ENCODE measurements at regions of chr3 and their contacts with region 1.

Region 1: DNA sequence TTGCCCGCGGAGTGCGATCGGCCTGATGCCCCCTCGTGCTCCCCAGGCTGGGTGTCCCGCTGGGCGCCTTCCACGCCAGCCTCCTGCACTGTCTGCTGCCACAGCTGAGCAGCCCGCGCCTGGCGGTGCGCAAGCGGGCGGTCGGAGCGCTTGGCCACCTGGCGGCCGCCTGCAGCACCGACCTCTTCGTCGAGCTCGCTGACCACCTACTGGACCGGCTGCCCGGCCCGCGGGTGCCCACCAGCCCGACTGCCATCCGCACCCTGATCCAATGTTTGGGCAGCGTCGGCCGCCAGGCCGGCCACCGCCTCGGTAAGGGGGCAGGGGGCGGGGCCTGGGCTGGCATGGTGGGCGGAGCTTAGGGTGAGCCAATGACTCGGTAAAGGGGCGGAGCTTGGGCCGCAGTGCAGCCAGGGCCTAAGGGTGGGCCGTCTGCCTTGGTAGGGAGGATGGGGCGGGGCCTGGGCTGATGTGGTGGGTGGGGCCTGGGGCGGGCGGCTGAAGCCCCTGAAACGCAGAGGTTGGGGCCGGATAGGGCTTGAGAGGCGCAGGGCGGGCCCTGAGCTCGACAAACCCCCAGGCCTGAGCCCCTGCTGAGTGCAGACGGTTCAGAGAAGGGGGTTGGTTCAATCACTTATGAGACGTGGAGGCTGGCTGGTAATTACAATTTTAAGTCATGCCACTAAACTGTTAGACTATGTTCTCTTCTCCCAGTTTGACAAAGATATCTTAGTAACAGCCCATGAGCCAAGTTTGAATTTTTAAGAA is 13.7 kb downstream of the CAND2 start:
- DNase-seq: peak; percentile 87 to 98
- H3K4me3 ChIP-seq: peak overlapping the region; percentile 37 to 57
- H3K27ac ChIP-seq: peak overlapping the region; percentile 53 to 77
- H3K4me1 ChIP-seq: peaks cover 0 to 11% of the 10 kb centered on the region in 2 donors
- H3K27me3 ChIP-seq: no peaks in the 10 kb centered on the region
- CTCF ChIP-seq: peak; percentile 76 to 92 (median 85)

Region 2: DNA sequence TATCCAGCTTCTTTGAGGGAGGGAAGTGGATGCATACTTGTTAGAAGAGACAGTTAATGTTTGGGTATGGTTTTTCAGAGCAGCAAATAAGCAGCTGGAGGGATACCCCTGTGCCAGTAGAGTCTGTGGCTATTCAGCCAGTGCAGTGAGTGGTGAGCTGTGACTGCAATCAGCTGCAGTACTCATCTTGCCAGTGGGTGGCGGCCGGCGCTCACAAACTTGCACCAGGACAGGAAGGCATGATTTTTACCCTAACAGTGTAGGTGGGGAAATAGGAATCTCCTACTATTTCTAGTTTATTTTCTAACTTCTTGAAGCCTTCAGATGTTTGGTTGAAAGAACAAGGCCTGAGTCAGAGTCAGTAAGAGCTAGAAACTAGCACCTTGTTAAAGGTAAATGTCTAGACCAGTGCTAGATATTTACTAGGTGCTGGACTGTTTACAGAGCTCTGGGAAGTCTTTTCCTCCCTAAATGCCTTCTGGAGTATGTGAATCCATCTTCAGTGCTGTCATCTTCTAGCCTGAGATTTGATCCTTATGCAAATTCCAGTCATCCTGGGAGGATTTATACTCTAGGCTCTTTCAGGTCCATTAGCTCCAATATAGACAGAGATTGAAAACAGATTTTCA is 675.1 kb before region 1 on chr3:
- intact Hi-C with region 1: loop called (anchors 5 kb)
- DNase-seq: peak in 1 of 2 donors; percentile 84
- H3K4me3 ChIP-seq: no peak overlapping the region
- H3K27ac ChIP-seq: no peak overlapping the region
- H3K4me1 ChIP-seq: no peaks in the 10 kb centered on the region
- H3K27me3 ChIP-seq: no peaks in the 10 kb centered on the region
- CTCF ChIP-seq: peak; percentile 85 to 88 (median 87)

Region 3: GRCh38 chr3:12706504-12707253 is 103.5 kb before region 1 on chr3:
- intact Hi-C with region 1: loop called (anchors 5 kb)
- DNase-seq: peak in 1 of 2 donors; percentile 76
- H3K4me3 ChIP-seq: no peak overlapping the region
- H3K27ac ChIP-seq: no peak overlapping the region
- H3K4me1 ChIP-seq: peaks cover 0 to 2% of the 10 kb centered on the region in 2 donors
- H3K27me3 ChIP-seq: no peaks in the 10 kb centered on the region
- CTCF ChIP-seq: peak; percentile 25 to 56 (median 45)

Region 4: GRCh38 chr3:12830785-12831156 is 20.6 kb after region 1 on chr3:
- intact Hi-C with region 1: no loop called
- DNase-seq: no peak
- H3K4me3 ChIP-seq: no peak overlapping the region
- H3K27ac ChIP-seq: no peak overlapping the region
- H3K4me1 ChIP-seq: no peaks in the 10 kb centered on the region
- H3K27me3 ChIP-seq: no peaks in the 10 kb centered on the region
- CTCF ChIP-seq: no peak

Region 5: GRCh38 chr3:12841149-12841970 is 31.2 kb after region 1 on chr3 and contains the start of gene RPL32:
- intact Hi-C with region 1: loop called (anchors 1 kb)
- DNase-seq: peak; percentile 31 to 92
- H3K4me3 ChIP-seq: peak within 1 kb of the TSS; percentile 71 to 84
- H3K27ac ChIP-seq: peak within 1 kb of the TSS; percentile 91 to 95
- H3K4me1 ChIP-seq: peaks cover 0 to 19% of the 10 kb centered on the region in 2 donors
- H3K27me3 ChIP-seq: no peaks in the 10 kb centered on the region
- CTCF ChIP-seq: peak; percentile 74 to 82 (median 78)
- total RNA-seq, gene RPL32: 1,821 TPM

Measured in ascending aorta (tissue), 2 donors.